ENCODE measurements at regions of chr5 and their contacts with region 1.

Region 1: DNA sequence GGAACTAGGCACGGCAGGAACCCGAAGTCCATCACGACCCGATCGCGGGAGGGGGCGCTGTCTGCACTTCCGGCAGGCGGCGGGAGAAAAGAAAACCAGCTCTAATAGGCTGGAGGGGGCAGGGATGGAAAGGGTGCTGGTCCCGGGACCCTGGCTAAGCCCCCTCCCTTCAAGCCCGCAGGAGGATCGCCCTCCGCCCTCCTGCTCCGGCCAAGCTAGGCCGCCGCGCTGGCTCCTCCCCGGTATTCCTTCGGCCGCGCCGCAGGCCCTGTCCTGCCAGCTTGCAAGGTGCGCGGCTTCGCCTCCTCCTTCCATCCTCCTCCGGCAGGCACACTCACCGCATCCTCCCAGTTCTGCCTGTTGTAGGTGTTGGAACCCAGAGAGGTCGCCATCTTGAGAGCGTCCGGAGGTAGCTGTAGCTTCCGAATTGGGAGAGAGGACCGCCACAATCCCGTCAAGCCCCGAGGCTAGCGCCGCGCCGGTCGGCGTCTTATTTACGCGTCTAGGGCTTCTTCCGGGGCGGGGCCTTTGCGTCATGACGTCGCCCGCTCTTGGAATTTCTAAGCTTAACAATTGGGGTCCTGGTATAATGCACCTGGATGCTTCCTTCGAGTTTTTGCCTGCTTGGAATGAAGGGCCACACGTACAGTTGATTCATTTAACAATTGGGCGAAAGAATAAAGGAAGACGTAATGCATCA is at the start of gene RBM22:
- DNase-seq: peak; percentile 87 to 94 (median 90)
- H3K4me3 ChIP-seq: peak within 1 kb of the TSS; percentile 88
- H3K4me3 Mint-ChIP-seq: peak within 1 kb of the TSS in 1 of 7 donors; percentile 82
- H3K27ac ChIP-seq: peak within 1 kb of the TSS; percentile 99
- H3K27ac Mint-ChIP-seq: no peak within 1 kb of the TSS
- H3K4me1 ChIP-seq: peaks cover 21% of the 10 kb centered on the region
- H3K4me1 Mint-ChIP-seq: no peaks in the 10 kb centered on the region
- H3K27me3 ChIP-seq: no peaks in the 10 kb centered on the region
- H3K27me3 Mint-ChIP-seq: no peaks in the 10 kb centered on the region
- total RNA-seq, gene RBM22: 72.7 to 73.6 TPM

Region 2: DNA sequence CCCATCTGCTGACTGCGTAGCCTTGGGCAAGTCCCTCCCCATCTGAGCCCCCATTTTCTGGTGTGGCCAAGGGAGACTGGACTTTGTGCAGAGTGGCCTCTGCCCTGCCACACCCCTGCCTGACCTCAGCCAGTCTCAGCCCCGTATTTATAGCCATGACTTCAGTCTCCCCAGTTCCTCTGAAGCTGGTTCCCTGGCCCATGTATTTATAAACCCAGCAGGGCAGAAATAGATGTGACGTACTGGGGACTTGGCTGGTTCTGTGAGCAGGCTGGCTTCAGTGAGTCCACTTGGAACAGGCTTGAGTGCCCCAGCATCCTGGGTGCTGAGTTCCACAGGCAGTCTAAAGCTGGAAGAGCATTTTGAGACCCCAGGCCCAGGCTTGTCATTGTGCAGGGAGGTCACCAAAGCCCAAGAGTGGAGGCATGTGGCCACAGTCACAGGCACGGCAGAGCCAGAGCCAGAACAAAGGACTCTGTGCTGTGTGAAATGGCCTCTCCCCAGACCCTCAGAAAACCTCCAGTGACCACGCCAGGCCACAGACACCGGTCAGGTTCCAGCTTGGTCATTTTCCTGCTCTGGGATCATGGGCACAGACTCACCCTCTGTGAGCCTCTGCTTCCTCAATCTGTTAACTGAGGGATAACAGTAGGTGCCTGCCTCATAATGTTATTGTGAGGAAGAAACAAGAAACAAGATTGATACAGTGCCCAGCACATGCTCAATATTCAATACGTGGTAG is 90.7 kb before region 1 on chr5:
- CTCF ChIA-PET with region 1: no interaction called
- POLR2A ChIA-PET with region 1: no interaction called
- DNase-seq: no peak
- H3K4me3 ChIP-seq: no peak overlapping the region
- H3K4me3 Mint-ChIP-seq: no peak overlapping the region
- H3K27ac ChIP-seq: no peak overlapping the region
- H3K27ac Mint-ChIP-seq: no peak overlapping the region
- H3K4me1 ChIP-seq: no peaks in the 10 kb centered on the region
- H3K4me1 Mint-ChIP-seq: no peaks in the 10 kb centered on the region
- H3K27me3 ChIP-seq: no peaks in the 10 kb centered on the region
- H3K27me3 Mint-ChIP-seq: peaks cover 0 to 5% of the 10 kb centered on the region in 2 donors

Region 3: DNA sequence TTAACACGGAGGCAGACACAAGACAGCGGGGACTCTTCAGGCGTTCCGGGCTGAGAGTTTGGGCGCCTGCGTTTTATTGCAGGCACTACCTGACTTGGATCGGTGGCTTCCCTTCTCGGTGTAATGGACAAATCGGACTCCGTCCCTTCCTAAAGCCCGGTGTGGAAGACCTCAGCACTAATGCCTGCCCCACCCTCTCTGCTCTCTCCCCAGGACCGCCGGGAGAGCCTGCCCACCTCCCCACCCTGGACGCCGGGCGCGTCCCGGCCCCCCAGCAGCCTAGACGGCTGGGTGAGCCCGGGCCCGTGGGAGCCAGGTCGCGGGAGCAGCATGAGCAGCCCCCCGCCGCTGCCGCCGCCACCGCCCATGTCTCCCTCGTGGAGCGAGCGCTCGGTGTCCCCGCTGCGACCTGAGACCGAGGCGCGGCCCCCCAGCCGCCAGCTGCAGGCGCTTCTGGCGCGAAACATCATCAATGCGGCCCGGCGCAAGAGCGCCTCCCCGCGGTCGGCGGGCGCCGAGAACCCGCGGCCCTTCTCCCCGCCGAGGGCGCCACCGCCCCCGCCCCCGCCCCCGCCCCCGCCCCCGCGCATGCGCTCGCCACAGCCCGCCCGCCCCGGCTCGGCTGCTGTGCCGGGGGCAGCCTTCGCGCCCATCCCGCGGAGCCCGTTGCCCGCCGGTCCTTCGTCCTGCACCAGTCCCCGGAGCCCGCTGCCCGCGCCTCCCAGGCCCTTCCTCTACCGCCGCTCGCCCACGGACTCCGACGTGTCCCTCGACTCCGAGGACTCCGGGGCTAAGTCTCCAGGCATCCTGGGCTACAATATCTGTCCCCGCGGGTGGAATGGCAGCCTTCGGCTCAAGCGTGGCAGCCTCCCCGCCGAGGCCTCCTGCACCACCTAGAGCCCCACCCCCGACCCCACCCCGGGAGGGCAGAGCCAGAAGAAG is 44.3 kb before region 1 on chr5:
- CTCF ChIA-PET with region 1: interaction called, 10 read pairs
- POLR2A ChIA-PET with region 1: no interaction called
- DNase-seq: peak; percentile 75 to 85 (median 82)
- H3K4me3 ChIP-seq: peak overlapping the region; percentile 71
- H3K4me3 Mint-ChIP-seq: peak overlapping the region; percentile 64 to 93 (median 81)
- H3K27ac ChIP-seq: no peak overlapping the region
- H3K27ac Mint-ChIP-seq: peak overlapping the region in 5 of 8 donors; percentile 9 to 73 (median 56)
- H3K4me1 ChIP-seq: peaks cover 9% of the 10 kb centered on the region
- H3K4me1 Mint-ChIP-seq: peaks cover 5 to 11% (median 11%) of the 10 kb centered on the region in 3 donors
- H3K27me3 ChIP-seq: no peaks in the 10 kb centered on the region
- H3K27me3 Mint-ChIP-seq: peaks cover under 1 to 5% of the 10 kb centered on the region in 2 donors

Region 4: GRCh38 chr5:150758531-150759333 is 58.0 kb after region 1 on chr5 and contains the start of gene DCTN4:
- CTCF ChIA-PET with region 1: interaction called, 10 read pairs
- POLR2A ChIA-PET with region 1: interaction called, 26 read pairs
- DNase-seq: peak; percentile 91 to 95 (median 94)
- H3K4me3 ChIP-seq: peak within 1 kb of the TSS; percentile 92
- H3K4me3 Mint-ChIP-seq: peak within 1 kb of the TSS in 3 of 7 donors; percentile 48 to 72 (median 68)
- H3K27ac ChIP-seq: peak within 1 kb of the TSS; percentile 97
- H3K27ac Mint-ChIP-seq: peak within 1 kb of the TSS in 2 of 8 donors; percentile 3 to 45
- H3K4me1 ChIP-seq: peaks cover 34% of the 10 kb centered on the region
- H3K4me1 Mint-ChIP-seq: peaks cover 22 to 37% (median 31%) of the 10 kb centered on the region in 3 donors
- H3K27me3 ChIP-seq: no peaks in the 10 kb centered on the region
- H3K27me3 Mint-ChIP-seq: peaks cover 0 to 2% of the 10 kb centered on the region in 2 donors
- total RNA-seq, gene DCTN4: 37.0 to 39.6 TPM

Region 5: DNA sequence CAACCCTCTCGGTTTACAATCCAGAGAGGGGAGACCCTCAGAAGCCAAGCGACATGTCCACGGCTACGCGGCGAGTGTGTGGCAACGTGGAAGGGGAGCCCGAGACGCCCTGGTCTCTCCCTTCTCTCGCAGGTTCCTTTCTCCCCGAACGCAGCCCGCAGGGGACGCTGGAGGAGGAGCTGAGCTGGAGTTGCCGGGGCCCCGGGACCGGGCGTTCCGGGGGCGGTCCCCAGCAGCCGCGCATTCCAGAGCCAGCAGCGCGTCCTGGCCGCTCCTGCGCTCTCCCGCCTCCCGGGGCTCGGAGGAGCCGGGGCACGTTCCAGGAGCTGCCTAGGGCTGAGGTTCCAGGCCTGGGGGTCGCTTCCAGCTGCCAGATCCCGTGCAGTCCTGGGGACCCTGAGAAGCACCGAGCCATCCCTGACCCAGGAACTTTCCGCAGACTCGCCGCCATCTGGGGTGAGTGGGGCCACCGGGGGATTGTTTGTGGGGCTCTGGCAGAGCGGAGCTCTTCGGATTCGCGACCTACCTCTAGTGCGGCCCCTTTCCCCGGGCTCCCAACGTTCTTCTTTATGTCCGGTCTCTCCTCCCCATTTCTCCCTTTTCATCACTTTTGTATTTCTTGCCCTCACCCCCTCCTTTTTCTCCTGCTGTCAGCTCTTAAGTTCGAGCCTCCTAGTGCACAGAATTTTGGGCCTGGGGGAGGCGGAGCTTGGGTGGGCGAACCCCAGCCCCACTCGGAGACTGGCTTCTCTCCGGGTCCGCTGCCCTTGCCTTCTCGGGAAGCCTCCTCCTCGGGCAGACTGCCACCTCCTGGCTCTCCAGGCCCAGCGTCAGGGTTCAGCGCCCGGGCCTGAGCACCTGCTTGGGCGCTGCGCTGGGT is 78.0 kb after region 1 on chr5 and contains the start of gene SMIM3:
- CTCF ChIA-PET with region 1: interaction called, 24 read pairs
- POLR2A ChIA-PET with region 1: interaction called, 24 read pairs
- DNase-seq: peak; percentile 32 to 76 (median 48)
- H3K4me3 ChIP-seq: peak within 1 kb of the TSS; percentile 67
- H3K4me3 Mint-ChIP-seq: peak within 1 kb of the TSS; percentile 89 to 98 (median 95)
- H3K27ac ChIP-seq: peak within 1 kb of the TSS; percentile 59
- H3K27ac Mint-ChIP-seq: peak within 1 kb of the TSS; percentile 86 to 95 (median 92)
- H3K4me1 ChIP-seq: peaks cover 41% of the 10 kb centered on the region
- H3K4me1 Mint-ChIP-seq: peaks cover 51 to 63% (median 56%) of the 10 kb centered on the region in 3 donors
- H3K27me3 ChIP-seq: no peaks in the 10 kb centered on the region
- H3K27me3 Mint-ChIP-seq: peaks cover 6 to 7% of the 10 kb centered on the region in 2 donors
- total RNA-seq, gene SMIM3: 11.8 to 12.7 TPM

Region 6: GRCh38 chr5:150946351-150946905 is 245.7 kb after region 1 on chr5:
- CTCF ChIA-PET with region 1: no interaction called
- POLR2A ChIA-PET with region 1: no interaction called
- DNase-seq: no peak
- H3K4me3 ChIP-seq: no peak overlapping the region
- H3K4me3 Mint-ChIP-seq: no peak overlapping the region
- H3K27ac ChIP-seq: no peak overlapping the region
- H3K27ac Mint-ChIP-seq: no peak overlapping the region
- H3K4me1 ChIP-seq: no peaks in the 10 kb centered on the region
- H3K4me1 Mint-ChIP-seq: no peaks in the 10 kb centered on the region
- H3K27me3 ChIP-seq: no peaks in the 10 kb centered on the region
- H3K27me3 Mint-ChIP-seq: peaks cover 21 to 38% of the 10 kb centered on the region in 2 donors

Region 7: GRCh38 chr5:151771259-151772028 is 1070.7 kb after region 1 on chr5 and contains the start of gene G3BP1:
- CTCF ChIA-PET with region 1: no interaction called
- POLR2A ChIA-PET with region 1: interaction called, 15 read pairs
- DNase-seq: peak; percentile 98 to 100 (median 100)
- H3K4me3 ChIP-seq: peak within 1 kb of the TSS; percentile 86
- H3K4me3 Mint-ChIP-seq: peak within 1 kb of the TSS in 6 of 7 donors; percentile 83 to 98 (median 94)
- H3K27ac ChIP-seq: peak within 1 kb of the TSS; percentile 84
- H3K27ac Mint-ChIP-seq: peak within 1 kb of the TSS in 7 of 8 donors; percentile 57 to 95 (median 91)
- H3K4me1 ChIP-seq: peaks cover 47% of the 10 kb centered on the region
- H3K4me1 Mint-ChIP-seq: peaks cover 38 to 49% (median 47%) of the 10 kb centered on the region in 3 donors
- H3K27me3 ChIP-seq: no peaks in the 10 kb centered on the region
- H3K27me3 Mint-ChIP-seq: no peaks in the 10 kb centered on the region
- total RNA-seq, gene G3BP1: 371 to 377 TPM

Measured in CD8-positive, alpha-beta memory T cell (primary cell).